ENCODE measurements at regions of chr17 and their contacts with region 1.

Region 1: GRCh38 chr17:36591434-36592315 is at the start of gene DHRS11:
- DNase-seq: peak; percentile 74
- H3K4me3 ChIP-seq: peak within 1 kb of the TSS; percentile 73 to 84 (median 75)
- H3K27ac ChIP-seq: peak within 1 kb of the TSS; percentile 33
- H3K4me1 ChIP-seq: peaks cover 15% of the 10 kb centered on the region
- H3K27me3 ChIP-seq: no peaks in the 10 kb centered on the region
- CTCF ChIP-seq: peak in 1 of 2 donors; percentile 18
- total RNA-seq, gene DHRS11: 12.2 to 14.3 TPM

Region 2: DNA sequence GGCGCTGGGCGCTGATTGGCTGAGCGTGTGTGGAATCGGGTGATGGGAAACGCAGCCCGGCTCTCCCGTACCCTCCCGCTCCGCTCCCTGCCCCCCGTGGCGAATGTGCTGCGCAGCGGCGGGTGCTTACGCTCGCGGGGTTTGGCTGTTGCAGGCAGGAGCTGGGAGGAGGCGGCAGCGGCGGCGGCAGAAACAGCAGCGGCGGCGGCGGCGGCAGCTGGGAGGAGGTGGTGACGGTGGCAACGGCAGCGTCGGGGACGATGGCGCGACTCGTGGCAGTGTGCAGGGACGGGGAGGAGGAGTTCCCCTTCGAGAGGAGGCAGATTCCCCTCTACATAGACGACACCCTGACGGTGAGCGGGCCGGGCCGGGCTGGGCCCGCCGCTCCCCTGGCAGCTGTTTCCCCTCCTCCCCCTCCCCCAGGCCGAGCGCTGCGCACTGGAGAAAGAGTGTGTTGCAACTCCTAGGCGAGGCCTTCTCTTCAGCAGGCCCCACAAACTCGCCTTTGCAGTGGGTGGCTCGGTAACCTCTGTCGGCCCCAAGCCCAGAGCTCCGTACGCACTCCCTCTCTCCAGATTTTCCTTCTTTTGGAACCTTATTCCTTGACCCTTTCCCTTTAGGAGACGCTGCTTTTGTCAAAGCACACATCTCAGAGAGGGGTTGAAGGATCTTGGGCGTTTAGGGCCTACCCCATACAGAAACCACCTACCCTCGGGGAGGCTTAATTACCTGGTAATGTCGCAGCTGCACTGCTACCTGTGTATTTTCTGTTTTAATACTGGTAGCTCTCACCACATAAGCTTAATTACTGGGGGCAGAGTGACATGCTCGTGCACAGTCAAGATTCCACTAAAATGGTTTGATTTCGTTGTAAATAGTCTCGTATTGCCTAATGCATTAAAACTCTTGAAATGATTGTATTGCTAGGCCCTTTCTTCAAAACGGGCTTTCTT is 45.9 kb before region 1 on chr17:
- CTCF ChIA-PET with region 1: interaction called, 5 read pairs
- dilution Hi-C with region 1: no loop called
- in situ Hi-C with region 1: no loop called
- intact Hi-C with region 1: loop called (anchors 2 kb)
- DNase-seq: peak; percentile 97
- H3K4me3 ChIP-seq: peak overlapping the region; percentile 80 to 85 (median 81)
- H3K27ac ChIP-seq: peak overlapping the region; percentile 92
- H3K4me1 ChIP-seq: peaks cover 21% of the 10 kb centered on the region
- H3K27me3 ChIP-seq: no peaks in the 10 kb centered on the region
- CTCF ChIP-seq: no peak